Adrenal gland (tissue), 19 donors: ENCODE measurements at regions of chr3 and their contacts with region 1.

Region 1: GRCh38 chr3:6799264-6799915 is 61.5 kb upstream of the GRM7 start:
- DNase-seq: peak; percentile 18 to 54 (median 46)
- H3K4me3 ChIP-seq: no peak overlapping the region
- H3K27ac ChIP-seq: no peak overlapping the region
- H3K4me1 ChIP-seq: no peaks in the 10 kb centered on the region
- H3K27me3 ChIP-seq: no peaks in the 10 kb centered on the region
- CTCF ChIP-seq: peak; percentile 56 to 76 (median 65)
- POLR2A ChIP-seq: no peak

Region 2: DNA sequence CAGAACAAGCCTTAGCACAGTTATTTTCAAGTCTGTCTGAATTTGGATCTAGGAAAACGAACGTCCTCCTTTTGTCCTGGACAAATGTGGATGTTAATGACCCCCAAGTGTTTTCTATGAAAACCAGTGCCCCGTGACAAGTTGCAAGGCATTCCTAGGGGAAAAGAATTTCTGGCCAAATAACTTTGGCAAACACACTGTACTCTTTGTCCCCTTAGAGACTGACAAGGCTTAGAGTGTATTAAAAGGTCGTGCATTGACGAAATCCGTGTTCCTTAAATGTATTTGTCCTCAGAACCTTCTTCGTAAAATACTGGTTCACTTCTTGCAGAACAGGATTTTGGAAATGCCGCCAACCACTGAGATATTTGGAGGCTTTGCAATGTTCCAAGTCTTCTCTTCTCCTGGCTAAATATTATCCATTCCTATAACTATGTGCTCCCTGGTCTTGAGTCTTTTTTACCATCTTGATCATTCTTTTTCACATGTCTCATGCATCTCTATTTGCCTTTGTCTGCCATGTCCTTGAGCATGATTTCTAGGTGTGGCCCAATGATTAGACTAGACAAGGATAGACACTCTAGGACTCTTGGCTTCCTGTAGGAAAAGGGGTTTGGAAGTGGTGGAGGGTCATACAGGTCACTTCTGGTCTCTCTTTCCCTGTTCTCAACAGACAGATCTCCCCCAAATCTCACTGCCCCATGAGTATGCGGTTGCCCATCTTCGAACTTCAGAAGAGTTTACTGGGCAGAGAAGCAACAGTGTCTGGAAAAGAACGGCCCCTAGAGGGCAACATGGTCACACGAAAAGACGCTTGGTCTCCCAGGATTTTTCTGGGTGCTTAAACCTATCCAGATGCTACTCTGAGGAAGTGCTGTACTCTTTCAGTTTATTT is 1494.4 kb before region 1 on chr3:
- intact Hi-C with region 1: loop called in 1 of 2 experiments (anchors 10 kb)
- DNase-seq: peak; percentile 22 to 73 (median 30)
- H3K4me3 ChIP-seq: no peak overlapping the region
- H3K27ac ChIP-seq: no peak overlapping the region
- H3K4me1 ChIP-seq: no peaks in the 10 kb centered on the region
- H3K27me3 ChIP-seq: peaks cover 5% of the 10 kb centered on the region
- CTCF ChIP-seq: peak; percentile 38 to 66 (median 54)
- POLR2A ChIP-seq: no peak